IMR-90 (cell line): ENCODE measurements at regions of chr1 and their contacts with region 1.

Region 1: GRCh38 chr1:229270547-229271447 is at the start of gene RAB4A:
- DNase-seq: peak; percentile 81
- ATAC-seq: peak; percentile 96
- H3K4me3 ChIP-seq: peak within 1 kb of the TSS; percentile 87
- H3K27ac ChIP-seq: peak within 1 kb of the TSS; percentile 54
- H3K4me1 ChIP-seq: peaks cover 10% of the 10 kb centered on the region
- H3K27me3 ChIP-seq: no peaks in the 10 kb centered on the region
- CTCF ChIP-seq: no peak
- POLR2A ChIP-seq: peak; percentile 68; the same call in 1 of the 2 replicates
- RAD21 ChIP-seq: no peak
- total RNA-seq, gene RAB4A: 26.2 and 33.3 TPM in 2 replicates

Region 2: DNA sequence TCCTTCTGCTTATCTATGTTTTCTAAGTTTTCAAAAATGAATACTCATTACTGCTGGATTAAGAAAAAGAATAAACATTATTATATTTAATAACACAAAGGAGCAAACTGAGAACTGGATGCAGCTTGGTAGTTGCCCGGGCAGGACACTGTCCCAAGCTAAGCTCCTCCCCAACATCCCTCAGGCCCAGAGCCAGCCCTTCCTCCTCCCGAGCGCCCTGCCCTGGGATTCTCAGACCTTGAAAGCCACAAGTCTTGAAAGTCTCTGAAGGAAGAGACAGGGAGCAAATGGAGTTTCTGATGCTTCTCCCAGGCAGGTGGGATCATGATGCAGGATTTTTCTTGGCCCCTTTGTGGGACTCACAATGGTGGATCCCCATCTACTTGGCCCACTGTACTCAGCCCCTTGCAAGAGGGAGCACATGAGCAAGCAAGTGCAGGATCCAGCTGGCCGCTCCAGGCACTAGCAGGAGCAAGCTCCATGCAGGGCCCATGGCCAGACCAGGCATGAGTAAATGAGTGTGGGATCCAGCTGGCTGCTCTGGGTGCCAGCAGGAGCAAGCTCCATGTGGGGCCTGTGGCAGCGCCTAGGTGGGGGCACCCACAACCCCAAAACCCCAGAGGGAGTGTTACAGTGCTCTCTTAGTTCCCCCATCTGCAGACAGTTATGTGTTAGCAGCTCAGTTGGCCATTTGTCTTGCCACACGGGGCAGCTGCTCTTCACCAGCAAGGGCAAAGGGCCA is 32.0 kb before region 1 on chr1:
- CTCF ChIA-PET with region 1: no interaction called
- POLR2A ChIA-PET with region 1: no interaction called
- dilution Hi-C with region 1: no loop called
- in situ Hi-C with region 1: no loop called
- intact Hi-C with region 1: no loop called
- DNase-seq: no peak
- ATAC-seq: peak; percentile 95
- H3K4me3 ChIP-seq: no peak overlapping the region
- H3K27ac ChIP-seq: no peak overlapping the region; the same call in 1 of the 2 replicates
- H3K4me1 ChIP-seq: peaks cover 2% of the 10 kb centered on the region; the same call in 1 of the 2 replicates
- H3K27me3 ChIP-seq: peaks cover 13% of the 10 kb centered on the region
- CTCF ChIP-seq: no peak
- POLR2A ChIP-seq: no peak
- RAD21 ChIP-seq: no peak

Region 3: GRCh38 chr1:229318056-229318455 is 47.3 kb after region 1 on chr1:
- CTCF ChIA-PET with region 1: no interaction called
- POLR2A ChIA-PET with region 1: no interaction called
- dilution Hi-C with region 1: no loop called
- in situ Hi-C with region 1: no loop called
- intact Hi-C with region 1: loop called (anchors 5 kb)
- DNase-seq: peak; percentile 37
- ATAC-seq: peak; percentile 64
- H3K4me3 ChIP-seq: no peak overlapping the region
- H3K27ac ChIP-seq: no peak overlapping the region
- H3K4me1 ChIP-seq: peaks cover 2% of the 10 kb centered on the region; the same call in 1 of the 2 replicates
- H3K27me3 ChIP-seq: no peaks in the 10 kb centered on the region
- CTCF ChIP-seq: no peak
- POLR2A ChIP-seq: no peak
- RAD21 ChIP-seq: no peak

Region 4: GRCh38 chr1:229341774-229342655 is 71.2 kb after region 1 on chr1:
- CTCF ChIA-PET with region 1: no interaction called
- POLR2A ChIA-PET with region 1: interaction called, 3 read pairs
- dilution Hi-C with region 1: no loop called
- in situ Hi-C with region 1: no loop called
- intact Hi-C with region 1: loop called (anchors 2 kb)
- DNase-seq: peak; percentile 57
- ATAC-seq: peak; percentile 92
- H3K4me3 ChIP-seq: peak overlapping the region; percentile 78
- H3K27ac ChIP-seq: peak overlapping the region; percentile 77
- H3K4me1 ChIP-seq: peaks cover 2% of the 10 kb centered on the region; the same call in 1 of the 2 replicates
- H3K27me3 ChIP-seq: peaks cover 5% of the 10 kb centered on the region; the same call in 1 of the 2 replicates
- CTCF ChIP-seq: no peak
- POLR2A ChIP-seq: no peak
- RAD21 ChIP-seq: no peak

Region 5: GRCh38 chr1:229479660-229480399 is 209.0 kb after region 1 on chr1:
- CTCF ChIA-PET with region 1: no interaction called
- POLR2A ChIA-PET with region 1: no interaction called
- dilution Hi-C with region 1: loop called (anchors 25 kb)
- in situ Hi-C with region 1: no loop called
- intact Hi-C with region 1: no loop called
- DNase-seq: no peak
- ATAC-seq: no peak
- H3K4me3 ChIP-seq: no peak overlapping the region
- H3K27ac ChIP-seq: no peak overlapping the region
- H3K4me1 ChIP-seq: no peaks in the 10 kb centered on the region
- H3K27me3 ChIP-seq: no peaks in the 10 kb centered on the region
- CTCF ChIP-seq: no peak
- POLR2A ChIP-seq: no peak
- RAD21 ChIP-seq: no peak